Activated naive CD4-positive, alpha-beta T cell treated with anti-CD3 and anti-CD28 coated beads, Interleukin-2, amount 10 ng/mL, durations not matched to agents 7 days and 5 days (primary cell): ENCODE measurements at regions of chr6 and their contacts with region 1.

Region 1: DNA sequence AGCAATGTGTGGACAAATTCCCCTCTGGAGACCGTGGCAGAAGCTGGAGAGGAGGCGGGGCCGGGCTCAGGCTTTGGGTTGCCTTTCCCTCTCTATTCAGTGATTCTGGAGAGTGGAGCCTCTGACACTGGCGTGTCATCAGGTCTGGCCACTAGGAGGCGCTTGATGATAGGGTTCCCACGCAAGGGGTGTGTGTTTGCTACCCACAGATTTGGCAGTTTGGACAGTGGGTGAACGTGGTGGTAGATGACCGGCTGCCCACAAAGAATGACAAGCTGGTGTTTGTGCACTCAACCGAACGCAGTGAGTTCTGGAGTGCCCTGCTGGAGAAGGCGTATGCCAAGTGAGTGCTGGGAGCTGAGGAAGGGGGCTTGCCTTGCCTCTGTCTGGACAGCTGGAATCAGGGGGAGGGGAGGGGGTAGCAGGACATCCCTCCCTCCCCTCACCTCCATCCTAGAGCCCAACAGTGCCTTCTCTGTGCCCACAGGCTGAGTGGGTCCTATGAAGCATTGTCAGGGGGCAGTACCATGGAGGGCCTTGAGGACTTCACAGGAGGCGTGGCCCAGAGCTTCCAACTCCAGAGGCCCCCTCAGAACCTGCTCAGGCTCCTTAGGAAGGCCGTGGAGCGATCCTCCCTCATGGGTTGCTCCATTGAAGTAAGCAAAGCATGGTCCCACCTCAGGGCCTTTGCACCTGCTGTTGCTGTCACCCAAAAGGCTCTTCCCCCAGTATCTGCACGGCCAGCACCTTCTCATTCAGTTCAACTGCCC is 14.3 kb downstream of the CAPN11 start:
- DNase-seq: peak; percentile 87
- H3K4me3 Mint-ChIP-seq: no peak overlapping the region
- H3K27ac Mint-ChIP-seq: no peak overlapping the region
- H3K4me1 Mint-ChIP-seq: peaks cover 14% of the 10 kb centered on the region
- H3K27me3 Mint-ChIP-seq: peaks cover 68% of the 10 kb centered on the region

Region 2: GRCh38 chr6:44237813-44238433 is 65.0 kb after region 1 on chr6:
- CTCF ChIA-PET with region 1: interaction called, 16 read pairs
- DNase-seq: peak; percentile 82
- H3K4me3 Mint-ChIP-seq: peak overlapping the region; percentile 79
- H3K27ac Mint-ChIP-seq: peak overlapping the region; percentile 91
- H3K4me1 Mint-ChIP-seq: peaks cover 22% of the 10 kb centered on the region
- H3K27me3 Mint-ChIP-seq: peaks cover 8% of the 10 kb centered on the region

Region 3: DNA sequence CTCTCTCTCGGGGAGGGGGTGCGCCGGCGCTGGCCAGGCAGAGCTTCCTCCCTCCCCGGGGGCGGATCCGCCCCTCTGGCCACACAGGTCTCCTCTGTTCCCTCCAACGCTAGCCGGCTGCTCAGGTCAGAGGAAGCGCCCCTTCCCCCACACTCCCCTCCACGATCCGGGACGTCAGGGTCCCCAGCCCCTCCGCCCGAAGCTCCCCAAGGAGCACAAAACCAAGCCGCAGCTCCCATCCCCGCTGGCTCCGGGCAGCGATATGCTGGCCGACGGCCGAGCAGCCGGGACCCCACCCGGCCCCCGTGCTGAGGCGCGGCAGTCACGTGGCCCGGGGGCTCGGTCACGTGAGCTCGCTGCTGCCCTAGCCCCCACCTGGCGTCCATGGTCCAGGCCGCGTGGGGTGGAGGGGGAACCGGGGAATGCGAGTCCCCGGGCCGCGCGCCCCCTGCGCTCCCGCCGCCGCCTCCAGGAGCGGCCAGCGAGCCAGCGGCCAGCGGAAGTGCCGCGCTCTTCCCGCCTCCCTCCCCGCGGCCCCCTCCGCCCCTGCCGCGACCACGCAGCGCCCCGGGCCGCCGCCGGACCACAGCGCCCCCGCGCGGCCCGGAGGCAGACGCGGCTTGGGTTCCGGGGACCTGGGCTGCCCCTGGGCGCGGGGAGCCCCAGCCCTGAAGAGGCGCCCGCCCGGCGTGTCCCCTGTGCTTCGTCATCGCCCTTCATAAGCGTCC is 84.3 kb after region 1 on chr6 and contains the start of gene SLC35B2:
- CTCF ChIA-PET with region 1: interaction called, 32 read pairs
- DNase-seq: peak; percentile 71
- H3K4me3 Mint-ChIP-seq: peak within 1 kb of the TSS; percentile 87
- H3K27ac Mint-ChIP-seq: peak within 1 kb of the TSS; percentile 85
- H3K4me1 Mint-ChIP-seq: peaks cover 59% of the 10 kb centered on the region
- H3K27me3 Mint-ChIP-seq: no peaks in the 10 kb centered on the region